ENCODE measurements at regions of chr12 and their contacts with region 1.

Region 1: GRCh38 chr12:59808317-59808910 is 212.6 kb downstream of the SLC16A7 start:
- DNase-seq: no peak
- H3K4me3 ChIP-seq: no peak overlapping the region
- H3K27ac ChIP-seq: no peak overlapping the region
- H3K27me3 ChIP-seq: no peaks in the 10 kb centered on the region
- CTCF ChIP-seq: peak; percentile 55 to 84 (median 71)

Region 2: GRCh38 chr12:59425798-59426197 is 382.6 kb before region 1 on chr12:
- intact Hi-C with region 1: loop called in 1 of 2 experiments (anchors 10 kb)
- DNase-seq: no peak
- H3K4me3 ChIP-seq: no peak overlapping the region
- H3K27ac ChIP-seq: no peak overlapping the region
- H3K27me3 ChIP-seq: no peaks in the 10 kb centered on the region
- CTCF ChIP-seq: no peak